Heart left ventricle (tissue), 16 donors: ENCODE measurements at regions of chr16 and their contacts with region 1.

Region 1: DNA sequence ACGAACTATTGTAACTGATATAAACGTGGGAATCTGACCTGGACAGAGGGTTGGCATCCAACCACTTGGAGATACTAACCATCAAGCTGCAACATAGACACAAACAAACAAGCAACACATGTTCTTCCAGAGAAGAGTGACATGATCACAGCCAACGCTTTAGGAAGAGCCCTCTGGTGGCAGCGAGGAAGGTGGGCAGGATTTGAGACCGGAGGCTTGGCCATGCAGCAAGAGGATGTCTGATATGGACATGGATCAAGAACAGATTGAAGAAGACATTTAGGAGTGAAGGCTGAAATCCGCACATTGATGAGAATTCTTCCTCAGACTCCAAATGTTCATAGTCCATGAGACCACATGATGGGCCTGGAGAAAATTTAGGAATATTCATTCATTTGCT is 40.3 kb upstream of the TNRC6A start:
- DNase-seq: no peak
- ATAC-seq: peak; percentile 23 to 65 (median 58)
- H3K4me3 ChIP-seq: no peak overlapping the region
- H3K27ac ChIP-seq: no peak overlapping the region
- H3K4me1 ChIP-seq: peaks cover 0 to 15% (median 2%) of the 10 kb centered on the region in 12 donors
- H3K27me3 ChIP-seq: no peaks in the 10 kb centered on the region
- CTCF ChIP-seq: peak; percentile 2 to 66 (median 50)
- POLR2A ChIP-seq: no peak

Region 2: DNA sequence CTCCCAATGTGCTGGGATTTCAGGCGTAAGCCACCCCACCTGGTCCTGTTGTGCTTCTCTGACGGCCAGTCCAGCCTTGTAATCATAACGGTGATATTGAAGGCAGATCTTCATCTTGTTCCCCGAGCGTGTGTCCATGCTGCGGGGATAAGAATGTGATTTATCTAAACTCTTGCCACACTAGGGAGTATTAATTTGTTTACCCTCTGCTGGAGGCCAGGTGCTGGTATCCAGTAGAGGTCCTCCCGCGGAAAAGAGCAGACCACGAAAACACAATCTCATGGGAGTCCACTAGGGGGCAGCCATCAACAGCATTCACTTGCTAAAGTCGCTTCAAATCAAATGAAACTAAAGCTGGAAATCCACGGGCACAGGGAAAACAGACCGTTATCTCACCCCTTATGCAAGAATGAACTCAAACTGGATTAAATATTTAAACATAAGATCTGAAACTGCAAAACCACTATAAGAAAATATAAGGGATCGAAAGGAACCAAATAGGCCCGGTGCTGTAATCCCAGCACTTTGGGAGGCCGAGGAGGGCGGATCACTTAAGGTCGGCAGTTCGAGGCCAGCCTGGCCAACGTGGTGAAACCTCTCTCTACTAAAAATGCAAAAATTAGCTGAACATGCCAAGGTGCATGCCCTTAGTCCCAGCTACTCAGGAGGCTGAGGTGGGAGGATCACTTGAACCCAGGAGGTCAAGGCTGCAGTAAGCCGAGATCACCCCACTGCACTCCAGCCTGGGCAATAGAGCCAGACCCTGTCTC is 172.1 kb before region 1 on chr16:
- intact Hi-C with region 1: loop called in 2 of 10 experiments (anchors 2 to 10 kb)
- DNase-seq: peak; percentile 58 to 78 (median 74)
- ATAC-seq: peak in 3 of 4 donors; percentile 82 to 90 (median 85)
- H3K4me3 ChIP-seq: peak overlapping the region in 9 of 12 donors; percentile 6 to 41 (median 21)
- H3K27ac ChIP-seq: no peak overlapping the region
- H3K4me1 ChIP-seq: peaks cover 0 to 8% (median 0%) of the 10 kb centered on the region in 12 donors
- H3K27me3 ChIP-seq: no peaks in the 10 kb centered on the region
- CTCF ChIP-seq: peak; percentile 84 to 93 (median 88)
- POLR2A ChIP-seq: no peak

Region 3: DNA sequence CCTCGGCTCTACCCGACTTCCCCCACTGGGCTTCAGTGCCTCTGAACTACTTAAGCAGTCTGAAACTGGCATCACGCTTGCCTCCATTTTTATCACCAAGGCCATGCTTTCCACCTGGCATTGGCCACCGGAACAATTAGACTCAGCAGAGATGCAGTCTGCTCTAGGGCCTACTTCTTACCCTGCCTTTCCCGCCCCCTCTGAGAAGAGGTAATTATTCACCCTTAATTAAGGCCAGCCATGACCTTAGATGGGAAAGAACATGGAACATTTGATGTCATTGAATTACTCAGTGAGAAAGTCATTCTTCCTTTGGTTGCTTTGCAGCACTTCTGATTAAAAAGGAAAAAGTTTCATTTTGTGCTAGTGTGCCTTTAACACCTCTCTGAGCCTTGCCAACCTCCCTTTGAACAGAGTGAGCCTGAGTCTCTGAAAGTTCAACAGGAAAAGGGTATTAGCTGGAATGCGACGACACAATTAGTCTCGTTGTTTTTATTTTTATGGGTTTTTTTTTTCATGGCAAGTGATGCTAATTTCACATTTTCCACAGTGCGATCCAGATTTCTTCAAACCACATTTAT is 20.6 kb before region 1 on chr16:
- intact Hi-C with region 1: no loop called
- DNase-seq: peak in 1 of 5 donors; percentile 45
- ATAC-seq: peak in 3 of 4 donors; percentile 42 to 55 (median 49)
- H3K4me3 ChIP-seq: no peak overlapping the region
- H3K27ac ChIP-seq: peak overlapping the region in 11 of 12 donors; percentile 7 to 88 (median 60)
- H3K4me1 ChIP-seq: peaks cover 0 to 20% (median 5%) of the 10 kb centered on the region in 12 donors
- H3K27me3 ChIP-seq: peaks cover 0 to 7% (median 0%) of the 10 kb centered on the region in 9 donors
- CTCF ChIP-seq: no peak
- POLR2A ChIP-seq: no peak

Region 4: GRCh38 chr16:24883714-24884151 is 194.6 kb after region 1 on chr16:
- intact Hi-C with region 1: no loop called
- DNase-seq: no peak
- ATAC-seq: no peak
- H3K4me3 ChIP-seq: no peak overlapping the region
- H3K27ac ChIP-seq: no peak overlapping the region
- H3K4me1 ChIP-seq: no peaks in the 10 kb centered on the region
- H3K27me3 ChIP-seq: no peaks in the 10 kb centered on the region
- CTCF ChIP-seq: no peak
- POLR2A ChIP-seq: no peak